ENCODE measurements at regions of chr1 and their contacts with region 1.

Region 1: GRCh38 chr1:43763497-43763973 is 56.2 kb downstream of the ST3GAL3 start:
- DNase-seq: peak; percentile 88
- H3K4me3 ChIP-seq: peak overlapping the region in 1 of 4 donors; percentile 5
- H3K27ac ChIP-seq: peak overlapping the region; percentile 30 to 63 (median 44)
- H3K4me1 ChIP-seq: peaks cover 0 to 27% (median 20%) of the 10 kb centered on the region in 4 donors
- H3K27me3 ChIP-seq: no peaks in the 10 kb centered on the region
- CTCF ChIP-seq: peak; percentile 82 to 94 (median 88)
- EP300 ChIP-seq: no peak
- POLR2A ChIP-seq: no peak

Region 2: GRCh38 chr1:43691871-43692815 is 71.4 kb before region 1 on chr1:
- intact Hi-C with region 1: no loop called
- DNase-seq: no peak
- H3K4me3 ChIP-seq: no peak overlapping the region
- H3K27ac ChIP-seq: peak overlapping the region in 1 of 4 donors; percentile 14
- H3K4me1 ChIP-seq: peaks cover 0 to 6% (median 5%) of the 10 kb centered on the region in 4 donors
- H3K27me3 ChIP-seq: no peaks in the 10 kb centered on the region
- CTCF ChIP-seq: no peak
- EP300 ChIP-seq: no peak
- POLR2A ChIP-seq: no peak

Region 3: GRCh38 chr1:43934101-43934985 is 170.8 kb after region 1 on chr1:
- intact Hi-C with region 1: loop called (anchors 1 kb)
- DNase-seq: peak; percentile 83
- H3K4me3 ChIP-seq: peak overlapping the region in 3 of 4 donors; percentile 34 to 45 (median 43)
- H3K27ac ChIP-seq: peak overlapping the region in 1 of 4 donors; percentile 17
- H3K4me1 ChIP-seq: peaks cover 0 to 41% (median 36%) of the 10 kb centered on the region in 4 donors
- H3K27me3 ChIP-seq: peaks cover 0 to 17% (median 0%) of the 10 kb centered on the region in 3 donors
- CTCF ChIP-seq: peak; percentile 84 to 96 (median 90)
- EP300 ChIP-seq: no peak
- POLR2A ChIP-seq: no peak

Region 4: DNA sequence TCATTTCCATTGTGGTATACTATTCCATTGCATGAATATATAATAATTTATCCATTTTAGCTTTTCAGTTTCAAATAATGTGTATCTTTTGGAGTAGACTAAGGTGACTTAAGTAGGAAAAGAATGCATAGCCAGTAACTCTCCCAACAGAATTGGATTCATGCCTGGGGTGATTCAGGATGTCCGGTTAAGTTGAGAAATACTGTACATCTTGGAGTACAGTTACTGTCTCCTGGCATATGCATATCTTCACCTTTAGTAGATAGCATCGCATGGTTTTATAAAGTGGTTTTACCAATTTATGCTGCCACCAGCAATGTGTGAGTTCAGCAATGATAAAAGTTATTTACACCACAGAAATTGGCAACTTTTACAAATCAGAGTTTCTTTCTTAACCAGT is 286.3 kb after region 1 on chr1:
- intact Hi-C with region 1: loop called (anchors 5 kb)
- DNase-seq: no peak
- H3K4me3 ChIP-seq: no peak overlapping the region
- H3K27ac ChIP-seq: peak overlapping the region in 2 of 4 donors; percentile 72
- H3K4me1 ChIP-seq: peaks cover 0 to 30% (median 16%) of the 10 kb centered on the region in 4 donors
- H3K27me3 ChIP-seq: no peaks in the 10 kb centered on the region
- CTCF ChIP-seq: no peak
- EP300 ChIP-seq: no peak
- POLR2A ChIP-seq: no peak